ENCODE measurements at regions of chr19 and their contacts with region 1.

Region 1: DNA sequence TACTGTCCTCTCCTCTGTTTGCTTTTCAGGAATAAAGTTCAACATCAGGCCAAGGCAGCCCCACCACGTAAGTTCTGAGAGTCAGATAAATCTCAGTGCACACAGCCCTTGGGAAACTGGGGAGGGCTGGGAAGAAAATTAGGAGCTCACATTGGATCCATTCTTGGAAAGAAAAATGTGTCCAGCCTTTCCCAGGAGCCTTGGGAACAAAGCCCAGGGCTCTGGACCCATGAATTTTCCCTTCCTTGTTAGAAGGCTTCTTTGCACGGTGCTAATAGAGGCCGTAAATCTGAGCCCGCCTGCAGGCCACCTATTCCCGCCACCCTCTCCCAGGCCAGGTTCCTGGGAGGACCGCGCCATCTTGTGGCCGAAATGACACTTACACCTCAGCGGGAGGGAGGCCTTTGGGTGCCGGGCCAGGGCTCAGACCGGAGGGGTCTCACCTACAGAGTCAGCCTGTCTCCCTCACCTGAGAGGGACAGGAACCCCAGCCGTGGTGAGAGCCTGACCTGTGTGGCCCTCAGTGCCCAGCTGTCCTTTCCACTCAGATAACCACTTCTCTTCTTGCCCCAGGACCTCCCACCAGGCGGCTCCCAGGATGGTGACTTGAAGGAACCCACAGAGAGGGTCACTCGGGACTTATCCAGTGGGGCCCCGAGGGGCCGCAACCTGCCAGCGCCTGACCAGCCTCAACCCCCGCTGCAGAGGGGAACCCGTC is 25.1 kb upstream of the KCTD15 start:
- DNase-seq: peak; percentile 80 to 94
- ATAC-seq: peak; percentile 54 to 91
- H3K4me3 ChIP-seq: no peak overlapping the region
- H3K27ac ChIP-seq: no peak overlapping the region
- H3K4me1 ChIP-seq: no peaks in the 10 kb centered on the region
- CTCF ChIP-seq: peak; percentile 98
- EP300 ChIP-seq: no peak
- POLR2A ChIP-seq: no peak
- RAD21 ChIP-seq: peak; percentile 99 to 100

Region 2: DNA sequence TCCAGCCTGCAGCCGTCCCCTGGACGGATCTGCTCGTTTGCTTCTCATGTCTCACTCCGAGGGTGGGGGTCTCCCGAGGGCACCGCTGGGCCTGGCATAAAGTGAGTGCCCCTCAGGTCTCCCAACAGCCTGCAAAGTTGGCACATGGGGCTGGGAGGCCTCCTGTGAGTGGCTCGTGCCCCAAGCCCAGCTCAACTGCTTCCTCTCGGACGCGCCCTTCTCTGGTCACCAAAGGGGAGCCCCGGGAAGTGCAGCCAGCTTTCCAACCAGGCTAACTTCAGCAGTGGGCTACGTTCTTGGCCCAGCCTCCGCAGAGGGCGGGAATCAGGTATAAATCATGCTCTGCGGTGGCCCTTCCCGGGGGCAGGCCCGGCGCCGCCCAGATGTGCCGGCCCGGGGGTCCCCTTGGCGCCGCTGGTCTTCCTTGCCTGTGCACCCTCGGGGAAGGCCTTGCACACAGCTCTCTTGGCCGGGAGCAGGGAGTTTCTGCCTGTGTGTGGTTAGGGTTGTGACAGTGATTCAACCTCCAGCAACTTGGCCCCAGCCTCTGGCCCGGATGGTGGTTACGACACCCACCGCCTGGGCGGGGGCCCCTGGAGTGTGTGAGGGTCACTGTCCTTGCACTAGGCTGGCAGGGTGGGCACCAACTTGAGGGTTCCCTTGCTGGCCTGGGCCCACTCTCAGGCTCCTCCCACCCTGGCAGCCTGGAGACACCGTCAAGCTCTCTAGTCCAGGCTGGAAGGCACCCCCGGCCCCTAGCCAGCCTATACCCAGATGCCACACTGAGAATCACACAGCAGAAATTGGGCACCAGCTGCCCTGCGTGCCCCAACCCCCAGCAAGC is 377.3 kb before region 1 on chr19:
- CTCF ChIA-PET with region 1: interaction called, 17 read pairs
- POLR2A ChIA-PET with region 1: no interaction called
- DNase-seq: no peak
- ATAC-seq: peak; percentile 5 to 7; a peak in 2 of 6 replicates
- H3K4me3 ChIP-seq: no peak overlapping the region
- H3K27ac ChIP-seq: peak overlapping the region in 1 of 2 experiments; percentile 47; a peak in 3 of 6 replicates
- H3K4me1 ChIP-seq: peaks cover 30% of the 10 kb centered on the region
- CTCF ChIP-seq: no peak
- EP300 ChIP-seq: no peak
- POLR2A ChIP-seq: no peak
- RAD21 ChIP-seq: no peak

Region 3: DNA sequence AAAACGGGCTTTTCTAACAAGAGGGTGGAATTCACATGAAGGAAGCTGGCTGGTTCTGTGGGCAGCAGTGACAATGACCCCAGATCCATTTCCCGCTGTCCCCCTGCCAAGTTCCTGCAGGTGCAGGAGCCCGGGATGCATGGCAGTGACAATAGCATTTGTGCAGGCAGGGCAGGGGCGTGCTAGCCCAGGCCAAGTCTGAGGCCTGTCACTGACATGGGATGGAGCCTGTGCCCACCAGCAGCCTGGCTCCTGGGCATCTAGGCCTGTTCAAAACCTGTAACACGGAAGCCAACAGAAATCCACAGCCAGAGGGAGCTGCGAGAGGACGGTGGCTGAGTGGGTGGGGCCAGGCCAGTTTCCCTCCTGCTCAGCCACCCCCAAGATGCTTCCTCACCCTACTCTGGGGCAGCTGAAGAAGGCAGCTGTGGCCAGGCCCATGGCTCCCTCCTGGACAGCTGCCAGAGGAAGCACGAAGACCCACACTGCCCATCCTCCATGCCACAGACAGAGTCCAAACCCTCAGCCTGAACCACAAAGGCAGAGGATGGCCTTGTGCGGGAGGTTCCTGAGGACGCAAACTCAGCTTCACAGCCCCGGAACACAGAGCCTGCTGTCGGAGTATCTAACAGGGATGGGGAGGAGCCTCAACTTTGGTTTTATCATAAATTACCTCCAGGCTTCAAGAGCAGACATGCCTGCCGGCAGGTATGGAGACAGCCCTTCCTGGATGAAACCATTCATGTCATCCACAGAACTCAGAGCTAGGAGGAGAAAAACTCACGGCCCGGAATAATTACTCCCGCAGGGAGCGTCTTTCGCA is 324.0 kb before region 1 on chr19:
- CTCF ChIA-PET with region 1: interaction called, 61 read pairs
- POLR2A ChIA-PET with region 1: no interaction called
- DNase-seq: no peak
- ATAC-seq: peak in 1 of 2 experiments; percentile 17; a peak in 1 of 6 replicates
- H3K4me3 ChIP-seq: no peak overlapping the region
- H3K27ac ChIP-seq: no peak overlapping the region
- H3K4me1 ChIP-seq: no peaks in the 10 kb centered on the region
- CTCF ChIP-seq: no peak
- EP300 ChIP-seq: no peak
- POLR2A ChIP-seq: no peak
- RAD21 ChIP-seq: no peak

Region 4: GRCh38 chr19:33752018-33752800 is 19.3 kb before region 1 on chr19:
- CTCF ChIA-PET with region 1: interaction called, 122 read pairs
- POLR2A ChIA-PET with region 1: no interaction called
- DNase-seq: no peak
- ATAC-seq: peak; percentile 36 to 73; a peak in 4 of 6 replicates
- H3K4me3 ChIP-seq: no peak overlapping the region
- H3K27ac ChIP-seq: no peak overlapping the region
- H3K4me1 ChIP-seq: no peaks in the 10 kb centered on the region
- CTCF ChIP-seq: peak; percentile 8; the same call in 1 of the 3 replicates
- EP300 ChIP-seq: no peak
- POLR2A ChIP-seq: no peak
- RAD21 ChIP-seq: peak in 1 of 2 experiments; percentile 27; a peak in 2 of 5 replicates

Region 5: DNA sequence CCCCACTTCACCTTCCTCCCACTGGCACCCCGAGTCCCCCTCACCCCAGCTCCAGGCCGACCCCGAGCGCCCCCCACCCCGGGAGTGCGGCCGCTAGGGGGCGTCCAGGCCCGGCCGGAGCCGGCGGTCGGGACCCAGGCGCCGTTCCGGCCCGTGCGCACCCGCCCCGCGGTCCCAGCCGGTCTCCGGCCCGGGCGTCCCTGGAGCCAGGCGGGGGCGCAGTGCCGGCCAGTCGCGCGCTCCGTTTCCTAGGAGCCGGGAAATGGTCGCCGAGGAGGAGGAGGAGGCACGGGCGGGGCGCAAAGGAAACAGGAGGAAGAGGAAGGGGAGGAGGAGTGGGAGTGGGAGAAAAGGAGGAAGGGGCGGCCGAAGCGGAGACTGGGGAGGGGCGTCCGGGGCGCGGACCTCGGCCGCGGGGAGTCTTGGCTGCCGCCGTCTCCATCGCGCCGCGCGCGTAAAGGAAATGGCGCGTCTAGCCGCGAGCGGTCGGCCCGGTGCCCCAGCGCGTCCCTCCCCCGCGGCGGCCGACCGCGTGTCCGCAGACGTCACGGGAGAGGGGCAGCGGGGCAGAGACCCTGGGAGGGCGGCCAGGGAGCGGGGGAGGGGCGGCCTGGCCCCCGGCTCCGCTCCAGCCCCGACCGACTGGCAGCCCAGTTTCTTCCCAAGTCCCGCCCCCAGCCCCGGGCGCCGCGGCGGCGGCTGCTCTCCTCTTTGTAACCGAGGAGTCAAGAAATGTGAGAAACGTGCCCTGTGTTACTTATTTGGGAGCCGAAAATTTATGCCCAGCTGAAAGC is 24.0 kb after region 1 on chr19:
- CTCF ChIA-PET with region 1: interaction called, 313 read pairs
- POLR2A ChIA-PET with region 1: no interaction called
- DNase-seq: peak; percentile 94 to 96
- ATAC-seq: peak; percentile 70 to 80
- H3K4me3 ChIP-seq: peak overlapping the region; percentile 88
- H3K27ac ChIP-seq: peak overlapping the region; percentile 96 to 97
- H3K4me1 ChIP-seq: peaks cover 28% of the 10 kb centered on the region
- CTCF ChIP-seq: peak; percentile 100
- EP300 ChIP-seq: peak; percentile 34 to 73; a peak in 1 of 5 replicates
- POLR2A ChIP-seq: peak; percentile 85
- RAD21 ChIP-seq: peak; percentile 42 to 87; a peak in 4 of 5 replicates